ENCODE measurements at regions of chr11 and their contacts with region 1.

Region 1: DNA sequence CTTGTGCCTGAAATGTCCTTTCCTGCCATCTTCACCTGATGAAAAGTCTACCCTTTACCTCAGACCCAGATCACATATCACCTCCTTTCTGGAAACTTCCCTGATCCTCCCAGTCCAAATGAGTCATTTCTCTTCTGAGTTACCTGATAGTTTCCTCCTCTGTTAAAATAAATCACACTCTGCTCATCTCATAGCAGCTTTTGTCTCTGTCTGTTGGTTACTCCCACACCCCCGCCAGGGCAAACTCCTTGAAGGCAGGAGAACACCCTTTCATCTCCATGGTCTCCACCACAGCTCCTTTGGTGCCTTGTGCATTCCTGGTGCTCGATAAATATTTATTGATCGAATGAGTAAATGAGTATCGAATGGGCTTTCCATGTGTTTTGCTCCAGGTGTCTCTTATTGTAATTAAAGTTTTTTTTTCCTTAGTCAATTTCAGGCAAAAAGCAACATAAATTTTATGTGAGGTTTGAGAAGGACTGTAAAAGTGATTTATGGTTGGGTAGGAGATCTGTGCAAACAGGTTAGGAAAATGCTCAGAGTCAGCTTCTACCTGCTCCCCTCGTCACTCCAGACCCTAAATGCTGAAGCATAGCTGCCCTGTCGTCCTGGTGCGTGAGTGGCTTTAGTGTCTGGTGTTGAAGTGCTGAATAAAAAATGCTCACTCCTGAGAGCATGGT is 178.2 kb downstream of the GRIK4 start:
- DNase-seq: no peak
- H3K4me3 ChIP-seq: no peak overlapping the region
- CTCF ChIP-seq: no peak

Region 2: DNA sequence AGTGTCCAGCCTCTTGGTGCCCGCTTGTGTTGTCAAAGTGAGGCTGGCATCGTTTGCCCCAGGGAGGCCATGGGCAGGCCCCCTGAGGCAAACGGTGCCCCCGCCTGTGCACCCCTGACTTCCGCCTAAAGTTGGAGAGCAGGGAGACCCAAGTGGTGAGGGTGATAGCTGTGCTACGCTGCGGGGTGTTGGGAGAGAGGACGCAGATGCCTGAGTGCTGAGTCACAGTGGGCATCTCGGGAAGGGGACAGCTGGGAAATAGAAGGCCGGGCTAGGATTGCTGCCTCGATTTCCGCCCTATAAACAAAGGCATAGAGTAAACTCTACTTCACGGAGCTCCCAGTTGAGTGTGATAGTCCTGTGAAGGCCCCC is 172.4 kb before region 1 on chr11:
- CTCF ChIA-PET with region 1: interaction called, 23 read pairs
- POLR2A ChIA-PET with region 1: no interaction called
- DNase-seq: no peak
- H3K4me3 ChIP-seq: no peak overlapping the region
- CTCF ChIP-seq: no peak

Region 3: GRCh38 chr11:120612513-120613263 is 77.0 kb before region 1 on chr11:
- CTCF ChIA-PET with region 1: no interaction called
- POLR2A ChIA-PET with region 1: no interaction called
- DNase-seq: no peak
- H3K4me3 ChIP-seq: no peak overlapping the region
- CTCF ChIP-seq: no peak

Region 4: GRCh38 chr11:120674542-120674941 is 15.2 kb before region 1 on chr11:
- CTCF ChIA-PET with region 1: interaction called, 35 read pairs
- POLR2A ChIA-PET with region 1: no interaction called
- DNase-seq: peak; percentile 42
- H3K4me3 ChIP-seq: no peak overlapping the region
- CTCF ChIP-seq: no peak

Region 5: GRCh38 chr11:120710354-120711131 is 20.8 kb after region 1 on chr11:
- CTCF ChIA-PET with region 1: interaction called, 10 read pairs
- POLR2A ChIA-PET with region 1: no interaction called
- DNase-seq: peak; percentile 9
- H3K4me3 ChIP-seq: no peak overlapping the region
- CTCF ChIP-seq: no peak

Region 6: GRCh38 chr11:121464352-121464946 is 774.7 kb after region 1 on chr11:
- CTCF ChIA-PET with region 1: no interaction called
- POLR2A ChIA-PET with region 1: no interaction called
- DNase-seq: peak; percentile 59
- H3K4me3 ChIP-seq: no peak overlapping the region
- CTCF ChIP-seq: no peak